ENCODE measurements at regions of chr2 and their contacts with region 1.

Region 1: DNA sequence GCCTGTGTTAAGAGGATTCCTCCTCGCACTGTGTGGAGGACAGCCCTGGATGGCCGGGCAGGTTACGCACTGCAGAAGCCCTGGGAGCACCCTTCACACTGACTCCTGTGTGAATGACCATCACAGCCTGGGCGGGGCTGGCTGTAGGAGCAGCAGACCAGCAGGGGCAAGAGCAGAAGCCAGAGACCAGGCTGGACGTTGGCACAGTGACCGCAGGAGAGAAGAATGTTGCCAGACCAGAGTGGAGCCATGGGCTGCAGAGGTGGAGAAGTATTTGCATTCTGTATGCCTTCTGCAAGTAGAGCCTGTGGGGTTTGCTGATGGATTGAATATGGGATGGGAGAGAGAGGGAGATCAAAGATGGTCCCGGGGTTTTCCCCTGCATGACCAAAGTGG is 23.1 kb downstream of the LRRFIP1 start:
- DNase-seq: peak in 1 of 2 donors; percentile 53
- H3K4me3 ChIP-seq: no peak overlapping the region
- CTCF ChIP-seq: no peak
- POLR2A ChIP-seq: no peak

Region 2: DNA sequence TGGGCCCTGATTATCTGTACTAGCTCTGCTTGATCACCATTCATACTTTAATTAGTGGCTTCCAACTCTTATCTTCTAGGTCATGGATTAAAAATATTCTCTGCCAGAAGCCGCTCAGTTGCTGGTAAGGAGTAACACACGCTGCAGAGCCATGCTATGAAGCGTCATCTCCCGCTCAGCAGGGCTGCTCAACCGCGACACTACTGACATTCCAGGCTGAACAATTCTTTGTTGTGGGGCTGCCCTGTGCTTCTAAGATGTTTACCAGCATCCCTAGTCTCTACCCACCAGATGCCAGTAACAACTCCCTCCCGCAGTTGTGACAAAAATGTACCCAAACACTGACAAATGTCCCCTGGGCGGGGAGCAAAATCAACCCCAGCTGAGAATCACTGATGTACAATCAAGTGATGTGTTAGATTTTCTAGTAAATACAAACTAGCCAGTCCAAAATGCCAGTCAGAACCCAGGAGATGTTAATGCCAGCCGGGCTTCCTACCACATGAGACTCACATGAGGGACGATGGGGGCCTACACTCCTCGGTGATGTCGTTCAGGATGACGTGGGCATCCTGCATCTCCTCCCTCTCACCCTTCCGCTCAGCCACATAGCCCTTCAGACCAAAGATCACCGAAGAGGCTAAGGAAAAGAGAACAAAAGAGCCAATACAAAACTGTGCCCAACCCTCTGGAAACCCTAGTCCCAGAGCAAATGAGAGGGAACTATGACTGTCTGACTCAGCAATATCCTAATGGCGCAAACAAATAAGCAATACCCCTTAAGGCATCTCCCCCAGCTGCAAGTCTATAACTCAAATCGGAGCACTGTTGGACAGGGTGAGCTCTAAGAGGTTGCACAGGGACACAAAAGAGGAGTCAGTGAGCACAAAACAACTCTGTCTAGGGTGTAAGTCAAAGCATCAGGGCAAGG is 537.4 kb after region 1 on chr2:
- intact Hi-C with region 1: loop called (anchors 10 kb)
- DNase-seq: no peak
- H3K4me3 ChIP-seq: no peak overlapping the region
- CTCF ChIP-seq: no peak
- POLR2A ChIP-seq: no peak

Region 3: DNA sequence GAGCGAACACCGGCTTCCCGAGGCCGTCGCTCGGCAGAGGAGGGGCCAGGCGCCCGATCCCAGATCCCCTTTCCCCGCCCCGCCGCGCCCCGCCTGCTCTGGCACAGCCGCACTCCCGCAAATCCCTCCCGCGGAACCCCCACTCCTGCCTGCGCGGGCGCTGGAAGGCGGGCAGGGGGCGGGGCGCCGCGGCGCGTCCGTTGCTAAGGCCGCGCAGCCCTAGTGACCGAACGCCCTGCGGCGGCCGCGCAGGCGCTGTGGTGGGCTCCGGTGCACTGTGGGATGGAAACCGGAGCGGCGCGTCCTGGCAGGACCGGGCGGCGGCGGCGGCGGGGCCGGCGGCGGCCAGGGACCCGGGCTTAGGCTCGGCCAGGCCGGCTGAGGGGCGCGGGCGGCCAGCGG is 669.8 kb after region 1 on chr2 and contains the start of gene TRAF3IP1:
- intact Hi-C with region 1: no loop called
- DNase-seq: peak; percentile 84 to 98
- H3K4me3 ChIP-seq: peak within 1 kb of the TSS; percentile 55
- CTCF ChIP-seq: no peak
- POLR2A ChIP-seq: no peak
- total RNA-seq, gene TRAF3IP1: 4.3 to 8.7 (median 8.2) TPM